RWPE1 (cell line): ENCODE measurements at regions of chr3 and their contacts with region 1.

Region 1: DNA sequence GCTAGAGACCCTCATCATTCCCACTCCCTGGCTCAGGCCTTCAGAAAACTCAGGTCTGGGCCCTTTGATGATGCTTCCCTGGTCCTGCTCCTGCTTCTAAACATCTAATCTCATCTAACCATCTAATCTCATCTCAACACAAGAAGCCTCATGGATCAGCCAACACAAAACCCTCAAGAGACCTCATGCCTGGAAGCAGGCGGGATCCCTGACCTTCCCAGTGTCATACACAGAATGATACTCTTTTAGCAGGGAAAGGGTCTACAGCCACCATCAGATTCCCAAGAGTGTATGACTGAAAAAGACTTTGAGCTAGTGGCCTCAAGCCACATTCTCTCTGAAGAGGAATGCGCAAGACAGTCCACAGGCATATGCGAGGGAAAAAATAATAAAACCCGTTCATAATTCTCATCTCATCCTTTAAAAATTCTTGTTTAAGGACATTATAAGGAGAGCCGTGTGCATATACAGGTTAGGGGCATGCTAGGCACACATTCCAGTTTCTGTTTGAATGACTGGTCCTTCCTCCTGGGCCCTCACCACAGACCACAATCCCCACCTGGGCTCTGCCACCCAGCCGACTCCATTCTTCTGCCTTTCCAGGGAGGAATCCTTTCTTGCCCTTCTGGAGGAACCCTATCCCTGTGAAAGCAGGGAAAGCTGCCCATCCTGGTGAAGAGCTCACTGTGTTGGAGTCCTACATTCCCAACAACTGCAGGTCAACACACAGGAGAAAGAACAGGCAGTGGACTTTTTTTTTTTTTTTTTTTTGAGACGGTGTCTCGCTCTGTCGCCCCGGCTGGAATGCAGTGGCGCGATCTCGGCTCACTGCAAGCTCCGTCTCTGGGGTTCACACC is 2.2 kb downstream of the ZXDC start:
- DNase-seq: no peak
- H3K27ac ChIP-seq: peak overlapping the region; percentile 93
- CTCF ChIP-seq: no peak

Region 2: GRCh38 chr3:127670761-127671522 is 1197.4 kb after region 1 on chr3:
- CTCF ChIA-PET with region 1: no interaction called
- POLR2A ChIA-PET with region 1: interaction called, 10 read pairs
- DNase-seq: no peak
- H3K27ac ChIP-seq: peak overlapping the region; percentile 33; the same call in 1 of the 2 replicates
- CTCF ChIP-seq: no peak